Activated T-helper 1 cell treated with anti-CD3 and anti-CD28 coated beads, Interleukin-12 subunit alpha, Interleukin-12 subunit beta, Interleukin-2, Interleukin-4 antibody, amounts not matched to agents 30 ng/mL and 10 ng/mL and 1 ng/mL, durations not matched to agents 14 hours and 24 hours and 36 hours (primary cell): ENCODE measurements at regions of chr21 and their contacts with region 1.

Region 1: GRCh38 chr21:46144464-46145070 is 10.8 kb downstream of the FTCD start:
- DNase-seq: no peak
- H3K4me3 Mint-ChIP-seq: no peak overlapping the region
- H3K27ac Mint-ChIP-seq: peak overlapping the region; percentile 70
- H3K4me1 Mint-ChIP-seq: peaks cover 8% of the 10 kb centered on the region
- H3K27me3 Mint-ChIP-seq: no peaks in the 10 kb centered on the region

Region 2: GRCh38 chr21:45973659-45974072 is 170.9 kb before region 1 on chr21:
- intact Hi-C with region 1: loop called (anchors 1 kb)
- DNase-seq: peak; percentile 64
- H3K4me3 Mint-ChIP-seq: peak overlapping the region; percentile 83
- H3K27ac Mint-ChIP-seq: peak overlapping the region; percentile 67
- H3K4me1 Mint-ChIP-seq: peaks cover 7% of the 10 kb centered on the region
- H3K27me3 Mint-ChIP-seq: peaks cover 31% of the 10 kb centered on the region

Region 3: GRCh38 chr21:46184625-46185555 is 40.3 kb after region 1 on chr21:
- intact Hi-C with region 1: loop called (anchors 1 kb)
- DNase-seq: peak; percentile 72
- H3K4me3 Mint-ChIP-seq: peak overlapping the region; percentile 85
- H3K27ac Mint-ChIP-seq: peak overlapping the region; percentile 71
- H3K4me1 Mint-ChIP-seq: no peaks in the 10 kb centered on the region
- H3K27me3 Mint-ChIP-seq: no peaks in the 10 kb centered on the region

Region 4: DNA sequence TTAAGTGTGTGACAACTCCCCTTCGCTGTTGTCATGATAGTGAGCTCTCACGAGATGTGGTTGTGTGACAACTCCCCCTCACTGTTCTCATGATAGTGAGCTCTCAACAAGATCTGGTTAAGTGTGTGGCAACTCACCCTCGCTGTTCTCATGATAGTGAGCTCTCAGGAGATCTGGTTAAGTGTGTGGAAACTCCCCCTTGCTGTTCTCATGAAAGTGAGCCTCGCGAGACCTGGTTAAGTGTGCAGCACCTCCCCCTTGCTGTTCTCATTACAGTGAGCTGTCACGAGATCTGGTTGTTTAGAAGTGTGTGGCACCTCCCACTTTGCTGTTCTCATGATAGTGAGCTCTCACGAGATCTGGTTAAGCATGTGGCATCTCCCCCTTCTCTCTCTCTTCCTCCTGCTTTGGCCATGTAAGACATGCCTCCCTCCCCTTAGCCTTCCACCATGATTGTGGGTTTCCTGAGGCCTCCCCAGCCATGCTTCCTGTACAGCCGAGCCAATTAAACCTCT is 109.1 kb after region 1 on chr21:
- intact Hi-C with region 1: loop called (anchors 2 kb)
- DNase-seq: peak; percentile 62
- H3K4me3 Mint-ChIP-seq: peak overlapping the region; percentile 62
- H3K27ac Mint-ChIP-seq: peak overlapping the region; percentile 95
- H3K4me1 Mint-ChIP-seq: peaks cover 43% of the 10 kb centered on the region
- H3K27me3 Mint-ChIP-seq: no peaks in the 10 kb centered on the region

Region 5: DNA sequence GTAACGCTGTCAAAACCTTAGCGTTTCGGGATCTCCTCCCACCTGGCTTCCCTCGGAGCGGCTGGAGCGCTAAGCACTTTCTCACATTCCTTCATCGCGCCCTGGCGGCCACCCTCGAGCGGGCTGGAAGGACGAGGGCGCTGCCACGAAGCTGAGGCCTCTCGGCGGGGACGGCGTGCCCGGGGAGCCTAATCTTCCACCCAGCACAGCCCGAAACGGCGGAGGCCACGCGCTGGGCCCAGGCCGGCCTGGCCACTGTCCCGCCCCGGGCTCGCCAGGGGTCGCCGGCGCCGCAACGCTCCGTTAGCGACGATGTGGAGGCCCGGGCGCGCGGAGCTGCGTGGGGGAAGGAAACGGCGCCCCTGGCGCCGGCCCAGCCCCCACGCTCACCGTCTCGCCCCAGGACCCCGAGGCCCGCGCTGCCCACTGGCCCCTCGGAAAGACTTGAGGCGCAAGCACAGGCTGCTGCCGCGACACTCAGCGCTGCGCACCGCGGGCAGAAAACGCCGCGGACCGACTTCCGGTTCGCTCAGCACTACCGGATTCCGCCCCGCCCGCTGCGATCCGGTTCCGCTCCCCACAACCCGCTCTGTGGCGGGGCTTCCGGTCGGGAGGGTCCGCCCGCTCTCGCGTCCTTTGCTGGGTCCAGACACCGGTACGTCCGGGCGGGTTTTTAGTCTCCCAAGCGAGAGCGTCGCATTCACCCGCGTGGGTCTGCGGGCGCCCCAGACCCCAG is 141.4 kb after region 1 on chr21 and contains the start of gene YBEY:
- intact Hi-C with region 1: loop called (anchors 5 kb)
- DNase-seq: peak; percentile 86
- H3K4me3 Mint-ChIP-seq: peak within 1 kb of the TSS; percentile 100
- H3K27ac Mint-ChIP-seq: peak within 1 kb of the TSS; percentile 99
- H3K4me1 Mint-ChIP-seq: peaks cover 45% of the 10 kb centered on the region
- H3K27me3 Mint-ChIP-seq: no peaks in the 10 kb centered on the region
- total RNA-seq, gene YBEY: 16.7 and 17.6 TPM in 2 replicates

Region 6: GRCh38 chr21:46559291-46559983 is 414.9 kb after region 1 on chr21:
- intact Hi-C with region 1: no loop called
- DNase-seq: peak; percentile 47
- H3K4me3 Mint-ChIP-seq: peak overlapping the region; percentile 73
- H3K27ac Mint-ChIP-seq: peak overlapping the region; percentile 95
- H3K4me1 Mint-ChIP-seq: peaks cover 40% of the 10 kb centered on the region
- H3K27me3 Mint-ChIP-seq: no peaks in the 10 kb centered on the region